Lower leg skin (tissue), 4 donors: ENCODE measurements at regions of chr12 and their contacts with region 1.

Region 1: GRCh38 chr12:65139389-65139788 is 18.3 kb upstream of the WIF1 start:
- DNase-seq: no peak
- H3K4me3 ChIP-seq: no peak overlapping the region
- CTCF ChIP-seq: no peak
- POLR2A ChIP-seq: no peak

Region 2: DNA sequence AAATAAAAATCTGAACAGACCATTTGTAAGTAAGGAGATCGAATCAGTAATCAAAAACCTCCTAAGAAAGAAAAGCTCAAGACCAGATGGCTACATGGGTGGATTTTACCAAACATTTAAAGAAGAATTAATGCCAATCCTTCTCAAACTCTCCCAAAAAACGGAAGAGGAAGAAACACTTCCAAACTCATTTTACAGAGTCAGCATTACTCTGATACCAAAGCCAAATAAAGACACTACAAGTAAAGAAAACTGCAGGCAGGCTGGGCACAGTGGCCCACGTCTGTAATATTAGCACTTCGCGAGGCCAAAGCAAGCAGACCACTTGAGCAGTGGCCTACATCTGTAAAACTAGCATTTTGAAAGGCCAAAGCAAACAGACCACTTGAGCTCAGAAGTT is 1630.8 kb before region 1 on chr12:
- intact Hi-C with region 1: loop called (anchors 5 kb)
- DNase-seq: no peak
- H3K4me3 ChIP-seq: no peak overlapping the region
- CTCF ChIP-seq: no peak
- POLR2A ChIP-seq: no peak